ENCODE measurements at regions of chr9 and their contacts with region 1.

Region 1: DNA sequence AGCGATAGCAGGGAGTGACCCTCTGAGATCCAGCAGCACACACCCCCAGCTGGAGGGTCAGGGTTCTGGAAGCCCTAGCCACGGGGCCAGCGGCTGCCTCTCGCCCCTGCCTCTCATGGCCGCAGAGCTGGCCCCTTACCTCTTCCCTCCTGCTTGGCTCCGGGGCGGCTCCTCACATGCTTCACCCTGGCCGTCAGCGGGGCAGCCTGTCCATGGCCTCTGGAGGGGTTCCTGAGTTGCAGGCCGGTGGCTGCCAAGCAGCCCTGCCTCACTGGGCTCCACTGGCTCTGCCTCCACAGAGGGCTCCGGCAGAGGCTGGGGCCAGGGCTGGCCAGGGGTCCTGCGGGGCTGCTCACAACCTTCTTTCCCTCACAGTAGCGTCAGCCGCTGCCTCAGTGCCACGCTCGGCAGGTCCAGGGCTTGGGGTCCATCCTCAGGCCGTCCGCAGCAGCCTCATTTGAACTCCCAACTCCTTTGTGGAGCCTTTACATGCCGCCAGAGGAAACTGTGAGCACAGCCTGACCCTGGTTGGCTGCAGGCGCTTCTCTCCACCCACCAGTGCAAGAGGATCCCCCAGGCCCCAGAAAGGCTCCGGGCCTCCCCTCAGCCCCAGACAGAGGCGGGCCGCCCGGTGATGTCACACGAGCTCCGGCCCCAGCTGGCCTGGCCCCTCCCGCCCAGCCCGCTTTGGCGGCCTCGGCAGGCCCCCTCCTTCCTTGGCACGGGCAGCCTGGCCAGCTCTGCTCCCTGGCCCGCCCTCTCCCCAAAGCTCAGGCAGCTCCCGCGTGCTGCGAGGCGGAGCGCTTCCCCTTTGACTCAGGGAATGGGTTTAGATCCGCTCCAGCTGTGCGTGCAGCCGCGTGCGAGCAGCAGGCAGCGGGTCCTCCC is at the start of gene ANGPTL2:
- DNase-seq: peak; percentile 96 to 98 (median 97)
- ATAC-seq: peak; percentile 96
- H3K4me3 ChIP-seq: peak within 1 kb of the TSS; percentile 56
- H3K27ac ChIP-seq: peak within 1 kb of the TSS; percentile 91
- H3K4me1 ChIP-seq: peaks cover 8% of the 10 kb centered on the region
- H3K27me3 ChIP-seq: no peaks in the 10 kb centered on the region
- total RNA-seq, gene ANGPTL2: 33.8 to 69.5 (median 47.2) TPM

Region 2: DNA sequence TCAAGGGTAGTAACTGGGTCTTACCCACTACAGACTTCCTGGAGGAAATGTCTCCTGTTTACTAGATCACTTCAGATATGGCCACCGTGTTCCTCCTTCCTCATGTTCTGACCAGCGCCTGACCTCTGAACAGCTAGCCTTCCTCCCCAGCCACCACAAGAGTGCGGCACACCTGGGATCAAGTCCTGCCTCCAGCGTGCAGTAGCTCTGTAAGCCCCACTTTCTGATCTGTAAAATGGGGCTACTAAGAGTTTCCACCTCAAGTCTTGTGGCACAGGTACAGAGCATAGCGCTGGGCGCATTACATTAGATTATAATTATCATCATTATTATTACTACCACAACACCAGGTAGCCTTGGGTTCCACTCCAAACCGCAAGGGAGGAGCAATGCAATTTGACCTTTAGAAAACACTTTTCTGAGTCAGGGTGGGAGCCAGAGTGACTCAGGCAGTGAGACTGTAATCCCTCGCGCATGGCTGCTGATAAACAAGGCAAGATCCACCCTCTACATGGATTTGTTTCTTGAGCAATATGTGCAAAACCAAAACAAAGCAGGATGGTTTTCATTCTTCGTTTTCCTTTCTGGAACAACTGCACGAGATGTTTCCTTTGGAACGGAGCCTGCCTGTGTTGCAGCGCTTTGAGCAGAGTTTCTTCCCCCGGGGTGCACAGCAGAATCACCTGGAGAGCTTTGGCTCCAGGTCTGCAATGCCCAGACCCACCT is 65.0 kb after region 1 on chr9:
- intact Hi-C with region 1: loop called in 1 of 4 experiments (anchors 10 kb)
- DNase-seq: peak; percentile 79 to 86 (median 82)
- ATAC-seq: peak; percentile 65 to 77
- H3K4me3 ChIP-seq: no peak overlapping the region
- H3K27ac ChIP-seq: peak overlapping the region; percentile 96
- H3K4me1 ChIP-seq: peaks cover 19% of the 10 kb centered on the region
- H3K27me3 ChIP-seq: no peaks in the 10 kb centered on the region